ENCODE measurements at regions of chrX and their contacts with region 1.

Region 1: DNA sequence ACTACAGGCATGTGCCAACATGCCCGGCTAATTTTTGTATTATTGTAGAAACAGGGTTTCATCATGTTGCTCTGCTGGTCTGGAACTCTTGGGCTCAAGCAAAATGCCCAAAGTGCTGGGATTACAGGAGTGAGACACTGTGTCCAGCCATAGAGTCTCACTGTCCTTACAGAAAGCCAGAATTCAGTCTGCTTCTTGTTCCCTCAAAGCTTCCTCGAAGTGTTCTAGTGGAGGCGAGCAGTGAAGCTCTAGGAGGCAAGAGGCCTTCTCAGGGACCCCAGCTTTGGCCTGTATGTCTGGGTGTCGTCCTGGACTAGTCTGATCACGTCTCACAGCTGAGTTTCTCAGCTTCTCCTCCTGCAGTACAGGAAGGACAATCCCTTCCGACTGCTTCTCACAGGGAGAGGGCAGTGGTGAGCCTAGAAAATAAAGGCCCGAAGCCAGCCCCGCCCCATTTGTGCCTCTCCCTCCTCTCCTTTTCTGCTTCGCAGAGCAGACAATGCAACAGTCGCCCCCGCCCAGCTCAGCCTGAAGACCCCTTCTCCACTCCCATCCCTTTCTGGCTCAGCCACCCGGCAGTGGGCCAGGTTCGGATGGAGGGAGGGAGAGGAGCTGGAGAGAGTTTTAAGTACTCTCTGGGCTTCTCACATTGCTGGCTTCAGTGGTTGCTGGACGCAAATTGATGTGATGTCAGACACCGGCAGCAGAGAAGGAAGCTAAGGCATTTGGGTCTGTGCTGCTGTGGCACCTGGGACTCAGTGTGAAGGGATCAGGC is 11.1 kb upstream of the FAM3A start:
- DNase-seq: peak; percentile 78
- ATAC-seq: peak; percentile 95
- H3K4me3 Mint-ChIP-seq: no peak overlapping the region
- H3K27ac Mint-ChIP-seq: peak overlapping the region; percentile 66
- H3K4me1 Mint-ChIP-seq: peaks cover 19% of the 10 kb centered on the region
- H3K27me3 Mint-ChIP-seq: no peaks in the 10 kb centered on the region

Region 2: GRCh38 chrX:154515878-154516655 is 11.0 kb before region 1 on chrX and contains the start of gene FAM3A:
- CTCF ChIA-PET with region 1: interaction called, 16 read pairs
- DNase-seq: peak; percentile 95
- ATAC-seq: peak; percentile 95
- H3K4me3 Mint-ChIP-seq: peak within 1 kb of the TSS; percentile 81
- H3K27ac Mint-ChIP-seq: peak within 1 kb of the TSS; percentile 85
- H3K4me1 Mint-ChIP-seq: peaks cover 26% of the 10 kb centered on the region
- H3K27me3 Mint-ChIP-seq: no peaks in the 10 kb centered on the region
- total RNA-seq, gene FAM3A: 21.5 to 31.7 TPM

Measured in activated CD8-positive, alpha-beta memory T cell treated with anti-CD3 and anti-CD28 coated beads, Interleukin-2, amount 10 ng/mL, durations not matched to agents 7 days and 5 days (primary cell).